ENCODE measurements at regions of chr19 and their contacts with region 1.

Region 1: DNA sequence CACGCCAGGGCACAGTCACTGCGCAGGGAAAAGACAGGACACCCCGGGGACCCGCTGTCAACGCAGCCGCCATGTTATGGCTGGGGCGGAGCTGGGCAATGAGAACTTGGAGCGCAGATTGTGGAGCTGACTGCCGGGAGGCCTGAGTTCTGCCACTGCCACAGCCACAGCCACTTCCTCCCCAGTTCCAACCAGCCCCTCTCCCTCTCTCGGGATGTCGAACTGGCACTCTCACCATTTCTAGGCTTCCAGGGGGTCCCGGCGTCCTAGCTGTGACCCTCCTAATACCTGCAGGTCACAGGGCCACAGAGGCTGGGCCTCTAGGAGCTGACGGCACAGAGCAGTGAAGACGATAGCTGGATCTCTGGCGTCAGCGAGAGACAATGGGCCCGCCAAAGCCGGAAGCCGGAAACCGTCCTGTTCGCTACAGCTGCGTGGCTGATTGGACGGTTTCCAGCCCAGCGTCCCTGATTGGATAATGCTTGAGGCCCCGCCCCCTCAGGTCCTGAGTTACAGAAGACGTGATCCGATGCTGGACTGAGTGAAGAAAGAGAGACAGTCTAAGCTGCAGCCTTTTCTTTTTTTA is at the start of gene ZNF506:
- DNase-seq: peak; percentile 92
- ATAC-seq: peak; percentile 98
- H3K4me3 ChIP-seq: peak within 1 kb of the TSS; percentile 98
- H3K27ac ChIP-seq: peak within 1 kb of the TSS; percentile 97
- H3K4me1 ChIP-seq: no peaks in the 10 kb centered on the region
- H3K27me3 ChIP-seq: no peaks in the 10 kb centered on the region
- CTCF ChIP-seq: no peak
- POLR2A ChIP-seq: peak; percentile 77
- RAD21 ChIP-seq: no peak
- total RNA-seq, gene ZNF506: 6.1 and 8.1 TPM in 2 replicates

Region 2: GRCh38 chr19:19865739-19866481 is 44.5 kb after region 1 on chr19 and contains the start of gene ZNF253:
- CTCF ChIA-PET with region 1: no interaction called
- POLR2A ChIA-PET with region 1: interaction called, 4 read pairs
- dilution Hi-C with region 1: no loop called
- in situ Hi-C with region 1: no loop called
- intact Hi-C with region 1: loop called (anchors 5 kb)
- DNase-seq: peak; percentile 88
- ATAC-seq: peak; percentile 98
- H3K4me3 ChIP-seq: peak within 1 kb of the TSS; percentile 90
- H3K27ac ChIP-seq: peak within 1 kb of the TSS; percentile 84
- H3K4me1 ChIP-seq: no peaks in the 10 kb centered on the region
- H3K27me3 ChIP-seq: no peaks in the 10 kb centered on the region
- CTCF ChIP-seq: no peak
- POLR2A ChIP-seq: peak; percentile 79
- RAD21 ChIP-seq: no peak
- total RNA-seq, gene ZNF253: 3.4 and 3.6 TPM in 2 replicates